ENCODE measurements at regions of chr2 and their contacts with region 1.

Region 1: DNA sequence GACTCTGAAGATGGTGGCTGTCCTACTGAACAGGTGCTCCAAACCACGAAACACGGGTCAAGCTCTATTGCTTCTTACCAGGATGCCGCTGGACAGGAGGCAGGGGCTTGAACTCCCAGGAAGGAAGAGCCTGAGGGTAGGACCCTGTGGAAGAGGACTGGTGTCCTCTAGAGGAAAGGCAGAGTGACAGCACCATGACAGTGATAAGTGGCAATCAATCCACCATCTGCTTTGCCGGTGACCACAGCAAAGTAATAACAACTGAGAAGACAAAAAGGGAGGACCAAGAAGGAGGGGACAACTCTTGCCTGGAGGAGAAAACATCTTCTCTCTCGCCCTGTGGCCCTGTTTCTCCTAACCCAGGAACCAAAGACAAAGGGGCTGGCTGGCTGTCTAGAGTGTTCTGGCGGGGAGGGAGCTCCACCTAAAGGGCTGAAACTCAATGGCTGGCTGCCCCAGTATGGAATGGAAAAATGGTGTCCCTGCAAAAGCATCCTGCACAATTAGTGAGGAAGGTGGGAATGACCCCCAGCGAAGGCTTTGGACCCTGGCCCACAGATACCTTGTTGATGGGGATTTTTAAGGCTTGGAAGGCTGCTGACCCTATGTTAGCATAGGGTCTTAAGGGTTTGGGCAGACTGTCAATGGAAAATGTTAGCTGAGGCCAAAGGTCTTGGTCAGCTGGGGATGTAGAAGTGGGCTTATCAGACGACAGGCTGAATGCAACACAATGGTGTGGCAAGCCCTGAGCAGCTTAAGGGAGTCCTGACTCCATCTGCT is 35.4 kb downstream of the PROC start:
- ATAC-seq: no peak
- H3K4me3 ChIP-seq: no peak overlapping the region
- H3K27ac ChIP-seq: no peak overlapping the region
- H3K4me1 ChIP-seq: peaks cover 0 to 3% of the 10 kb centered on the region in 2 donors

Region 2: GRCh38 chr2:127197475-127198385 is 255.9 kb before region 1 on chr2:
- in situ Hi-C with region 1: loop called in 1 of 9 experiments (anchors 25 kb)
- ATAC-seq: peak; percentile 87 to 100 (median 95)
- H3K4me3 ChIP-seq: no peak overlapping the region
- H3K27ac ChIP-seq: no peak overlapping the region
- H3K4me1 ChIP-seq: no peaks in the 10 kb centered on the region

Region 3: GRCh38 chr2:127790694-127791529 is 337.3 kb after region 1 on chr2:
- in situ Hi-C with region 1: no loop called
- ATAC-seq: no peak
- H3K4me3 ChIP-seq: no peak overlapping the region
- H3K27ac ChIP-seq: no peak overlapping the region
- H3K4me1 ChIP-seq: no peaks in the 10 kb centered on the region

Measured in motor neuron (in vitro differentiated cells).